ENCODE measurements at regions of chr5 and their contacts with region 1.

Region 1: GRCh38 chr5:91101600-91102379 is 281.3 kb downstream of the ARRDC3 start:
- DNase-seq: peak in 1 of 2 donors; percentile 86
- H3K4me3 ChIP-seq: no peak overlapping the region
- H3K27ac ChIP-seq: no peak overlapping the region
- H3K4me1 ChIP-seq: peaks cover 0 to 4% of the 10 kb centered on the region in 2 donors
- H3K27me3 ChIP-seq: no peaks in the 10 kb centered on the region
- CTCF ChIP-seq: peak; percentile 76 to 90 (median 79)

Region 2: DNA sequence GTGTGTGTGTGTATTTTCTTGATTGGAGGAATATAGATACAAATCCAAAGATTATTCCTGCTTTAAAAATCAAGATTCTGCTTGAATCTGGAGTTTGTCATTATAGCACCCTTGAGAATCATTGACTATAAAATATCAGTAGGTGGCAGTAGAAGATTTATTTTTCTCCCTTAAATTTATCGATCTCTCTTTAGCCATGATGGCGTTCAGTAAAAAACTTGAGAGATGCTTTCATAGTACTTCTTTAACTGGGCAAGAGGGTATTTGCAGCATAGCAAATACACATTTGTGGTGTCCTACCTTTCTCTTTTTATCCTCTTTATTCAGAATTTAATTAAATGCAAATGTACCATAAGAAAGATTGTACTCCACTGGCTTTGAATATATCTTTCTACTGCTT is 235.5 kb before region 1 on chr5:
- intact Hi-C with region 1: loop called (anchors 2 kb)
- DNase-seq: no peak
- H3K4me3 ChIP-seq: peak overlapping the region in 1 of 2 donors; percentile 42
- H3K27ac ChIP-seq: no peak overlapping the region
- H3K4me1 ChIP-seq: no peaks in the 10 kb centered on the region
- H3K27me3 ChIP-seq: no peaks in the 10 kb centered on the region
- CTCF ChIP-seq: peak; percentile 34 to 56 (median 50)

Region 3: DNA sequence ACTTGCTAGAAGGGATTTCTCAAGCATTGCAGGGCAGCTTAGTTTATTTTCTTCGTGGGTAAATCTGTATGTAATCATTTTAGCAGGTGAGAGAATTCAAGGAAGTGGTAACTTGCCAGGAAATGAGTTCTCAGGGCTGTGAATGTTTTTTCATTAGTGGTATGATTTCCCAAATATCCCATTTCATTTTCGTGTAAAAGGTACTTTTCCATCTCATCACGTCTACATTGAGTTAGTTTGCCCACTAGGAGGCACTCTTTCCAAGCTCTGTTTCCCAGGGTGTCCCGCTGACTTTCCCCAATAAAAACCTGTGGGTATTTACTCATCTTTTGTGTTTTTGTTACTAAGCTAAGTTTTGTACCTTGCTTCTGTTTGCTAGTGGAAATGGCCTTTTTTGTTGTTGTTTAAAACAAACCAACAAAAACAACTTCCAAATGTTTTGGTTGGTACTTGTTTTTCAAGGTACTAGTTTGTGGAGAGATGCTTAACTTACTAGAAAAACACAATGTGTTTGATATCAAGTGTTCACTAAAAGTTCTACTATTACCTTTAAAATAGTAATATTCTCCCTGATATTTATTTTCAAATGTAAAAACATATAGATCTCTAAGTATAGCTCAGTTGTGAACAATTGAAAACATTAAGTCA is 169.6 kb before region 1 on chr5:
- intact Hi-C with region 1: loop called (anchors 2 kb)
- DNase-seq: peak in 1 of 2 donors; percentile 69
- H3K4me3 ChIP-seq: no peak overlapping the region
- H3K27ac ChIP-seq: no peak overlapping the region
- H3K4me1 ChIP-seq: peaks cover 0 to 3% of the 10 kb centered on the region in 2 donors
- H3K27me3 ChIP-seq: no peaks in the 10 kb centered on the region
- CTCF ChIP-seq: peak; percentile 52 to 79 (median 57)

Region 4: DNA sequence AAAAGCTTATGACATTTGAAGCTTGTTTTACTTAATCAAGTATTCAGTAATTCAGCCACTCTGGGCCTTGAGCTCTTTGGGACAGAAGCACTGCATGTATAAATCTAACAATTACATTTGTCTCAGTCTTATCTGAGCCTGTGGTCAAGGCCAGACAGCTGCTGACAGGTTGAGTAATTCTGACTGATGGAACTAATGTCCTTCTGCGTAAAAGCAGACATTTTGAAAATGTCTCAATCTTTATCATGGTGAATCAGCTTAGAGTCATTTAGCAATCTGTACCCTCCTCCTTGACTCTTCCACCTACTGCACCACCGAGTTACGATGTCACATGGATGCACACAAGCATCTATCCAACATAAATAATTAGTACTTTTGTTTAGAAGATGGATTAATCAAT is 118.6 kb before region 1 on chr5:
- intact Hi-C with region 1: no loop called
- DNase-seq: no peak
- H3K4me3 ChIP-seq: no peak overlapping the region
- H3K27ac ChIP-seq: no peak overlapping the region
- H3K4me1 ChIP-seq: no peaks in the 10 kb centered on the region
- H3K27me3 ChIP-seq: no peaks in the 10 kb centered on the region
- CTCF ChIP-seq: no peak

Region 5: DNA sequence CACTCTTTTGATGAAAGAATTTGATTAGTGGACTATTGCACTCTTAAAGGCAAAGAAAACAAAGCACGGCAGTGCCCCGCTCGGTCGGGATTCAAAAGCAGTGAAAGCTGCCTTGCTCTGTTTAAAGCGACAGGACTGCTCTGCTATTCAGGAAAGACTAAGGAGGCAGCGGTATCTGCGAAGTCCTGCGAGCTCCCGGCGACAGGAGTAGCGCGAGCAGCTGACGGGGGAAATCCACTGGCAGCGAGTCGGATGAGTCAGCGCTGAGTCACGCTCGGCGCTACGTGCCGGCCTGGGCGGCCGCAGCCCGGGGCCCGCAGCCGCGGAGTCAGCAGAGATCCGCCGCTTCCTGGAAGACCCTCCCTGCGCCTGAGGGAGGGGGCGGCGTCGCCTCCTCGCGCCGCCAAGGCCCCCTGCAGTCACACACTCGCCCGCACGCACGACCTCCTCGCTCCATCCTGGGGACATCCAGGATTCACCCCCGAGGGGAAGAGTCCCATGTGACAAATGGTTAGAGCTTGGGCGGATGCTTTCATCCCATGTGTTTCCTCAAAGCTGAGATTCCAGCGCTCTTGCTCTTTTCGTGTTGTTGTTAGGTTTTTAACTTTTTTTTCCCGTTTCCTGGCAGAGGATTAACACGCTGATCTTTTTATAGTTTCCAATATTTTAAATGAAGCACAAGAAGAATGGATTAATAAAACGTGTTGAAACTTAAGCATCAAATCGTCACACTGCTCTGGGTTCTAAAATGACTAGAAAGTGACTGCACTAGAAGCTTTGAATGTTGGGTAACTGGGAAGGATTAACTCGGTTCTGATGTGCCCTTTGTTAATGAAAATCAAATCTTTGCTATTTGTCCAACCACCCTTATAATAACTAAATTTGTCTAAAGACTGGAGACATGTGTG is 178.8 kb after region 1 on chr5:
- intact Hi-C with region 1: loop called (anchors 2 kb)
- DNase-seq: peak; percentile 73 to 94
- H3K4me3 ChIP-seq: peak overlapping the region; percentile 60 to 72
- H3K27ac ChIP-seq: peak overlapping the region; percentile 77 to 85
- H3K4me1 ChIP-seq: peaks cover 0 to 7% of the 10 kb centered on the region in 2 donors
- H3K27me3 ChIP-seq: no peaks in the 10 kb centered on the region
- CTCF ChIP-seq: no peak

Region 6: GRCh38 chr5:91311697-91312501 is 210.1 kb after region 1 on chr5:
- intact Hi-C with region 1: loop called (anchors 5 kb)
- DNase-seq: peak; percentile 62 to 93
- H3K4me3 ChIP-seq: no peak overlapping the region
- H3K27ac ChIP-seq: peak overlapping the region; percentile 59 to 85
- H3K4me1 ChIP-seq: peaks cover 0 to 18% of the 10 kb centered on the region in 2 donors
- H3K27me3 ChIP-seq: no peaks in the 10 kb centered on the region
- CTCF ChIP-seq: peak in 1 of 3 experiments; percentile 11

Measured in ascending aorta (tissue), 2 donors.